PC-3 (cell line): ENCODE measurements at regions of chr13 and their contacts with region 1.

Region 1: GRCh38 chr13:77779552-77780272 is 82.2 kb downstream of the SLAIN1 start:
- DNase-seq: peak; percentile 63
- ATAC-seq: peak; percentile 70
- H3K4me3 ChIP-seq: no peak overlapping the region
- H3K27ac ChIP-seq: no peak overlapping the region
- H3K4me1 ChIP-seq: 0 out of 2 replicates have a peak, but pooled peaks cover 7% of the 10 kb centered on the region
- H3K27me3 ChIP-seq: no peaks in the 10 kb centered on the region
- CTCF ChIP-seq: peak; percentile 70

Region 2: DNA sequence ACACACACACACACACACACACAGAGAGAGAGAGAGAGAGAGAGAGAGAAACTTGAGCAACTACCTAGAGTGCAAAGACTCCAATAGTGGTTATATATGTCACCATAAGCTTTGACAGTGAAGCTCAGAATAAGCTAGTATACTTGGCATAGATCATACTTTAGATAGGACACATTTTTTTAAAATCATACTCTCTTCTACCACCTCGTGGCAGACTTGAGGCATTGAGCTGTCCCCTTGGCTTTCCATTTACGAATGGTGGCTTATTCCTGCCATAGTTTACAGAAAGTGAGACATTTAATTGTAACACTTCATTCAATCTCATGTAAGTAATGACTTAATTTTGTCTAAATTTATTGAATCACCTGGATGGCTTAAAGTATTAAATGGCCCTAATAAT is 30.7 kb after region 1 on chr13:
- CTCF ChIA-PET with region 1: no interaction called
- POLR2A ChIA-PET with region 1: no interaction called
- intact Hi-C with region 1: loop called (anchors 1 kb)
- DNase-seq: peak; percentile 53
- ATAC-seq: peak; percentile 53
- H3K4me3 ChIP-seq: no peak overlapping the region
- H3K27ac ChIP-seq: no peak overlapping the region
- H3K4me1 ChIP-seq: peaks cover 1% of the 10 kb centered on the region; the same call in 1 of the 2 replicates
- H3K27me3 ChIP-seq: no peaks in the 10 kb centered on the region
- CTCF ChIP-seq: peak; percentile 59

Region 3: DNA sequence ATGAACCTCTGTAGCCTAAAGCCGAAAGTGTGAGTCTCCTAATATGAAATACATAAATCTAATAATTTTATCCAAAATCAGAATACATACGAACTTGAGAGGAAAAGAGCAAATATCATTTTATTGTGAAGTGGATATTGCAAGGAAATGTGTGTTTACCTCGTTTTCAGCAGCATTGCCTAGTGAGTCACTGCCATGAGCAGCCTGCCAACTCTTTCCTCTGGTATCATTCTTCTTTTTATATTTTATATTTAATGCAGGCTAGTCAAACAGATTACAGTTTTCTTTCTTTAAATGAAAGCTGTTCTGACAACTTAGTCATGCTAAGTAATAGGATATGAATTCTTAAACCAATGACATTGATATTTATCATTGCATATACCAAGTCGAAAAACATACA is 94.7 kb after region 1 on chr13:
- CTCF ChIA-PET with region 1: no interaction called
- POLR2A ChIA-PET with region 1: no interaction called
- intact Hi-C with region 1: loop called (anchors 10 kb)
- DNase-seq: peak; percentile 59
- ATAC-seq: peak; percentile 69
- H3K4me3 ChIP-seq: no peak overlapping the region
- H3K27ac ChIP-seq: peak overlapping the region; percentile 73
- H3K4me1 ChIP-seq: peaks cover 16% of the 10 kb centered on the region
- H3K27me3 ChIP-seq: no peaks in the 10 kb centered on the region
- CTCF ChIP-seq: no peak

Region 4: DNA sequence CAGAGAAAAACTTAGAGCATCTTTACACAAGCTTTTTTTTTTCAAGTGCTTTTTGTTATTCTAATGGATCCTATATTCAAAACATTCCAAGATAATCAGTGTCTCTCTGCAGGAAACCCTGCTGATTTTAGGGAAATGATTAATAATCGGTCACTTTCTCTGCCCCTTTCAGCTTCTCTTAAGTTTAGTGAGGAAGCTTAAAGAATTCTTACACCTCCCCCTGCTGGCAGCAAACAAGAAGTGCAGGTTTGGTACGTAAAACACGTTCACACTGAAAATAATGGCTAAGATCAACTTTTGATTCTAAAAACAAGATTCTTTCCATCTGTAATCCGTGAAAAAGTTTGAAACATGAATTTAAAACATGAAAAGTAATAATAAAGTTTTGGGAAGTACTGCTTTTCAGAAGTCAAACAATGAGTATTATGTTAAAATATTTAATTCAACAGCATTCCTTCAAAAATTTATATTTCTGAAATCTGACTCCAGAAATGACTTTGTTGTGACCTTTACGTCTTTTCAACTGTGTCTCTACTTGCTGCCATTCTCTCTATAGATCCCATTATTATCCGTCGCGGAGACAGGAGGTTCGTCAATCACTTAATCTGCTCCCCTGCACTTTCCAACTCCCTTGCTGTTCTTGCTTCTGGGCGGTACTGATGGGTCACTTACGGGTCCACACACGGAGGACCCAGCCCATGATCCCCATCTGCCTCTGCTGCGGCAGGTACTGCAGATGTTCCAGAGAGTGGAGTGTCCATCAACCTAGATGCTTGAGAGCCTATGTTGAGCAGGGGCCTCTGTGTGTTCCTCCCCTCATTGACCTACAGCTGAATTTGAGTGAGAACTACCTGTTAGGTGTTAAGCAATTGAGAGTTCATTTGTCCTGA is 342.0 kb after region 1 on chr13:
- CTCF ChIA-PET with region 1: interaction called, 8 read pairs
- POLR2A ChIA-PET with region 1: no interaction called
- intact Hi-C with region 1: loop called (anchors 1 kb)
- DNase-seq: peak; percentile 64
- ATAC-seq: peak; percentile 42; the same call in 1 of the 2 replicates
- H3K4me3 ChIP-seq: no peak overlapping the region
- H3K27ac ChIP-seq: peak overlapping the region; percentile 21; the same call in 1 of the 2 replicates
- H3K4me1 ChIP-seq: no peaks in the 10 kb centered on the region
- H3K27me3 ChIP-seq: no peaks in the 10 kb centered on the region
- CTCF ChIP-seq: peak; percentile 82

Region 5: DNA sequence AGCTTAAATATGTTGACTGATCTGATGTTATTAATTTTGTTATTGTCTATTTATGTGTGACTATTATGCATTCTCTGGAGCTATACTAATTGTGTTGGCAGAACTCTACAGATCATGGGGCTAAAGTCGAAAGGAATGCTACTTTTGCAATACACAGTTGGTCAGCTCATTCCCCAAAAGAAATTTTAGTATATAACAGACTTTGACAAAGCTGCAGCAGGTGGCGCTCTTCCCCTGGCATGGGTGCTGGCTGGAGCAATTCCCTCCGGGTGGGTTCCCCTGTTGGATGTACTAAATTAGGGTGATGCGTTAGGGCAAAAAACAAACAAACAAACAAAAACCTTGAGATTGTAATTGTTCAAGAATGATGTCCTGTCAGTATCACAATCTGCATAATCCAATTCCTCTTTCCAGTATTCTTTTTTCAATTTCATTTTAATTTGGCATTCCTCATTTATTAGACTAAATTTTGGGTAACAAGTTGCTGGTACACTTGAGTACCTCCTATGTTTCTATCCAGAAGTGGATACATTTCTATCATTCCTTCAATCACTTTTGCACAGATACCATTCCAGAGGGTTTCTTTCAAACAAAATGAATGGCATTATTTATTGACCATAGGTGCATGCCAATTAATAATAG is 461.7 kb after region 1 on chr13:
- CTCF ChIA-PET with region 1: interaction called, 11 read pairs
- POLR2A ChIA-PET with region 1: no interaction called
- intact Hi-C with region 1: no loop called
- DNase-seq: peak; percentile 51
- ATAC-seq: peak; percentile 45; the same call in 1 of the 2 replicates
- H3K4me3 ChIP-seq: no peak overlapping the region
- H3K27ac ChIP-seq: no peak overlapping the region
- H3K4me1 ChIP-seq: no peaks in the 10 kb centered on the region
- H3K27me3 ChIP-seq: peaks cover 5% of the 10 kb centered on the region
- CTCF ChIP-seq: peak; percentile 71